ENCODE measurements at regions of chr2 and their contacts with region 1.

Region 1: GRCh38 chr2:162011706-162012564 is 62.1 kb downstream of the DPP4 start:
- DNase-seq: peak in 24 of 35 experiments; percentile 13 to 87 (median 30)
- ATAC-seq: peak; percentile 95 to 98 (median 96)
- H3K4me3 ChIP-seq: no peak overlapping the region
- H3K4me3 Mint-ChIP-seq: peak overlapping the region in 1 of 3 donors; percentile 59
- H3K27ac ChIP-seq: peak overlapping the region; percentile 96
- H3K27ac Mint-ChIP-seq: peak overlapping the region; percentile 94 to 95
- H3K4me1 ChIP-seq: peaks cover 33 to 76% of the 10 kb centered on the region in 2 experiments
- H3K4me1 Mint-ChIP-seq: peaks cover 70 to 75% (median 73%) of the 10 kb centered on the region in 3 donors
- H3K27me3 ChIP-seq: no peaks in the 10 kb centered on the region
- H3K27me3 Mint-ChIP-seq: no peaks in the 10 kb centered on the region

Region 2: DNA sequence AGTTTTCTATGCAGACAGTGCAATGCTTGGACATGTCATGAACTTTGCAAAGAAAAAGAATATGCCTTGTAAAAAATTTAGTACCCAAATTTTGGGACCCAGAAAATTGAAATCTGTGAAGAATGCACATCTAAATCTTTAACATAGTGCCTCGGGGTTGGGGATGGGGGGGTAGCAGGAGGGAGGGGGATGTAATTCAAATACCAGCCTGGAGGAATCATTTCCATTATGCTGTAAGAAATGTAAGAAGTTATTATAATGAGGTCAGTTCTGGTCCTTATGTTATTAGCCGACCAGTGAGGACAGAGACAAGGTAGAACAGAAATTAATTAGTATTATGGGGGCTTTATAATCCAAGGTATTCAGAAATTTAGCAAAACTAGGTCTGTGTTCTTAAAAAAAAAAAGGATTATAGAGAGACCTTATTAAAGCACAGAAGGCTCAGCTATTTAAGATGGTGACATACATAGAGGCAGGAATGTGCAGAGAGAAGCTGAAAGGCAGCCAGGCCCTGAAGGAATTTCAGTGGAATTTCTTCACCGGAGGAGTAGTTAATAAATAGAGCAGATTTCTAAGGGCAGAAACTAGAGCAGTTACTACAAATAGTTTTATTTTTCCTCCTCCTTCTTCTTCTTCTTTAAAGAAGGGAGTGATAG is 1429.3 kb before region 1 on chr2:
- CTCF ChIA-PET with region 1: no interaction called
- POLR2A ChIA-PET with region 1: no interaction called
- DNase-seq: no peak
- ATAC-seq: no peak
- H3K4me3 ChIP-seq: no peak overlapping the region
- H3K4me3 Mint-ChIP-seq: no peak overlapping the region
- H3K27ac ChIP-seq: no peak overlapping the region
- H3K27ac Mint-ChIP-seq: no peak overlapping the region
- H3K4me1 ChIP-seq: peaks cover 4 to 7% of the 10 kb centered on the region in 2 experiments
- H3K4me1 Mint-ChIP-seq: peaks cover 3 to 15% (median 8%) of the 10 kb centered on the region in 3 donors
- H3K27me3 ChIP-seq: no peaks in the 10 kb centered on the region
- H3K27me3 Mint-ChIP-seq: no peaks in the 10 kb centered on the region

Region 3: DNA sequence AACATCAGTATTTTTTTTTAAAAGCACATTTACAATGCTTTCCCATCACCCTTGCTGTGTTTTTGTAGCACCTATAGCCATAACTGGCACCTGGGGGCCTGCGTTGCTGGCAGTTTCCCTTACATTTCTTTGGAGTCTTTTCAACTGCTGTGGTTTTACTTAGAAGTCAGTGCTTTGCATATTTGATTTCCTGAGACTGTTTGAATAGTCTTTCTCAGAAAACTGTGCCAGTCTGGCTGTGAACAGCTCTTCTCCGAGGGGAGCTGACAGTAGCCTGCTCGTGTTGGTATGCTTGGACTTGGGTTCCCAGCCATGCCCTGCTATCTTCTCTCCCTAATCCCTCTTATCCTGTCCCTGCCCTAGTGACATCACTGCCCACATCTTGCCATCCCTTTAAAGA is 19.4 kb before region 1 on chr2:
- CTCF ChIA-PET with region 1: interaction called, 3 to 11 read pairs
- POLR2A ChIA-PET with region 1: interaction called in 1 of 2 experiments, 4 read pairs
- DNase-seq: peak in 34 of 35 experiments; percentile 20 to 70 (median 48)
- ATAC-seq: peak; percentile 87 to 93 (median 89)
- H3K4me3 ChIP-seq: peak overlapping the region; percentile 17 to 20
- H3K4me3 Mint-ChIP-seq: peak overlapping the region; percentile 72 to 74 (median 73)
- H3K27ac ChIP-seq: peak overlapping the region; percentile 79
- H3K27ac Mint-ChIP-seq: peak overlapping the region; percentile 98
- H3K4me1 ChIP-seq: peaks cover 26 to 43% of the 10 kb centered on the region in 2 experiments
- H3K4me1 Mint-ChIP-seq: peaks cover 62 to 67% (median 65%) of the 10 kb centered on the region in 3 donors
- H3K27me3 ChIP-seq: no peaks in the 10 kb centered on the region
- H3K27me3 Mint-ChIP-seq: no peaks in the 10 kb centered on the region

Region 4: GRCh38 chr2:162053066-162053807 is 41.3 kb after region 1 on chr2:
- CTCF ChIA-PET with region 1: interaction called, 3 to 10 read pairs
- POLR2A ChIA-PET with region 1: no interaction called
- DNase-seq: no peak
- ATAC-seq: no peak
- H3K4me3 ChIP-seq: no peak overlapping the region
- H3K4me3 Mint-ChIP-seq: no peak overlapping the region
- H3K27ac ChIP-seq: no peak overlapping the region
- H3K27ac Mint-ChIP-seq: no peak overlapping the region
- H3K4me1 ChIP-seq: peaks cover 8 to 26% of the 10 kb centered on the region in 2 experiments
- H3K4me1 Mint-ChIP-seq: peaks cover 51 to 63% (median 61%) of the 10 kb centered on the region in 3 donors
- H3K27me3 ChIP-seq: no peaks in the 10 kb centered on the region
- H3K27me3 Mint-ChIP-seq: no peaks in the 10 kb centered on the region

Region 5: GRCh38 chr2:162073888-162074645 is 62.1 kb after region 1 on chr2 and contains the start of gene DPP4:
- CTCF ChIA-PET with region 1: interaction called in 1 of 2 experiments, 13 read pairs
- POLR2A ChIA-PET with region 1: no interaction called
- DNase-seq: peak in 34 of 35 experiments; percentile 9 to 66 (median 40)
- ATAC-seq: peak; percentile 81 to 89 (median 84)
- H3K4me3 ChIP-seq: peak within 1 kb of the TSS; percentile 95 to 100
- H3K4me3 Mint-ChIP-seq: peak within 1 kb of the TSS; percentile 90 to 98 (median 97)
- H3K27ac ChIP-seq: peak within 1 kb of the TSS; percentile 72
- H3K27ac Mint-ChIP-seq: peak within 1 kb of the TSS; percentile 91 to 97
- H3K4me1 ChIP-seq: peaks cover 12 to 24% of the 10 kb centered on the region in 2 experiments
- H3K4me1 Mint-ChIP-seq: peaks cover 42 to 56% (median 50%) of the 10 kb centered on the region in 3 donors
- H3K27me3 ChIP-seq: peaks cover 0 to 11% of the 10 kb centered on the region in 2 experiments
- H3K27me3 Mint-ChIP-seq: no peaks in the 10 kb centered on the region
- total RNA-seq, gene DPP4: 30.1 to 47.7 (median 37.9) TPM